ENCODE measurements at regions of chr19 and their contacts with region 1.

Region 1: GRCh38 chr19:38270587-38271167 is 6.3 kb downstream of the SPINT2 start:
- DNase-seq: peak; percentile 74 to 92 (median 82)
- ATAC-seq: peak; percentile 83
- H3K4me3 ChIP-seq: peak overlapping the region; percentile 7; the same call in 1 of the 2 replicates
- H3K27ac ChIP-seq: peak overlapping the region; percentile 85
- H3K4me1 ChIP-seq: peaks cover 47 to 53% of the 10 kb centered on the region in 2 experiments
- H3K27me3 ChIP-seq: no peaks in the 10 kb centered on the region
- CTCF ChIP-seq: no peak
- EP300 ChIP-seq: peak; percentile 60; the same call in 1 of the 2 replicates
- POLR2A ChIP-seq: no peak
- RAD21 ChIP-seq: no peak

Region 2: DNA sequence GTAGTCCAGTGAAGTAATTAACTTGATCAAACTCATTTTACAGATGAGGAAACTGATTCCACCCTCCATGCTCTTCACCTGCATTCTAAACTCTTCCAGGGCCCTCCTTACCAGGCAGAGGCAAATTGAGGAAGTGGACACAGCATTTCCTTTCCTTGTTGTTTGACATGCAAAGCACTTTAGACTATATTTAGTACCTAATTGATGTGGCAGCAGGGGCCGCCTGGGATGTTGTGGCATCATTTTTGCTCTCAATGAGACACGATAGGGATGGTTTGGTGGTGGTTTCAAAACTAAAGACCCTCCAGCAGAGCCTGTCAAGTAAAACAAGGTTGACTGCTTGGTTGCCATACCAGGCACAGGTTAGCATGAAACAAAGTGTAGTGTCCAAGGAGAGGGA is 355.8 kb before region 1 on chr19:
- CTCF ChIA-PET with region 1: no interaction called
- POLR2A ChIA-PET with region 1: no interaction called
- in situ Hi-C with region 1: no loop called
- intact Hi-C with region 1: no loop called
- DNase-seq: no peak
- ATAC-seq: no peak
- H3K4me3 ChIP-seq: no peak overlapping the region
- H3K27ac ChIP-seq: no peak overlapping the region
- H3K4me1 ChIP-seq: no peaks in the 10 kb centered on the region
- H3K27me3 ChIP-seq: no peaks in the 10 kb centered on the region
- CTCF ChIP-seq: no peak
- EP300 ChIP-seq: no peak
- POLR2A ChIP-seq: no peak
- RAD21 ChIP-seq: no peak

Region 3: DNA sequence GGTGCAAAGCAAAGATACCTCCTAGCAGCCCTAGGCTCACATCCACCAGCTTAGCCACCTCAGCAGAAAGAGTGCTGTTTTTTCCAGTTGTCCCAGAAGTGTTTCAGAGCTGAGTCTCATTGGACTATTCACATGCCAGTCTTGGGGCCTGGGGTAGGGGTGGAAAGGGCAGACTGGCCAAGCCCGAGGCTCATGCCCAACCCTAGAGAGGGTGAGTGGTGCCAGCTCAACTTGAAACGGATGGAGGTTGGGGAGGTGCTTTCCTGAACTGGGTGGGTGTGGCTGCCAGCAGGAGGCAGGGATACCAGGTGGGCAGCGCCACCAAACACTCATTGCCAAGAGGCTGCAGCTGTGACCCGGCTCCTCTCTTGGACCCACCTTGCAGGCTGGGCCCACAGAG is 163.5 kb before region 1 on chr19:
- CTCF ChIA-PET with region 1: no interaction called
- POLR2A ChIA-PET with region 1: no interaction called
- in situ Hi-C with region 1: no loop called
- intact Hi-C with region 1: no loop called
- DNase-seq: no peak
- ATAC-seq: no peak
- H3K4me3 ChIP-seq: no peak overlapping the region
- H3K27ac ChIP-seq: no peak overlapping the region
- H3K4me1 ChIP-seq: peaks cover 0 to 3% of the 10 kb centered on the region in 2 experiments; a peak in 2 of 5 replicates
- H3K27me3 ChIP-seq: no peaks in the 10 kb centered on the region
- CTCF ChIP-seq: no peak
- EP300 ChIP-seq: no peak
- POLR2A ChIP-seq: no peak
- RAD21 ChIP-seq: no peak

Region 4: GRCh38 chr19:38255383-38256014 is 15.2 kb before region 1 on chr19:
- CTCF ChIA-PET with region 1: no interaction called
- POLR2A ChIA-PET with region 1: interaction called, 4 read pairs
- in situ Hi-C with region 1: no loop called
- intact Hi-C with region 1: loop called (anchors 2 kb)
- DNase-seq: peak; percentile 61 to 86 (median 70)
- ATAC-seq: peak; percentile 63
- H3K4me3 ChIP-seq: peak overlapping the region; percentile 57
- H3K27ac ChIP-seq: peak overlapping the region; percentile 82
- H3K4me1 ChIP-seq: peaks cover 10 to 54% of the 10 kb centered on the region in 2 experiments; a peak in 4 of 5 replicates
- H3K27me3 ChIP-seq: no peaks in the 10 kb centered on the region
- CTCF ChIP-seq: no peak
- EP300 ChIP-seq: no peak
- POLR2A ChIP-seq: no peak
- RAD21 ChIP-seq: no peak

Region 5: GRCh38 chr19:38284422-38284821 is 13.7 kb after region 1 on chr19:
- CTCF ChIA-PET with region 1: no interaction called
- POLR2A ChIA-PET with region 1: interaction called, 13 read pairs
- in situ Hi-C with region 1: no loop called
- intact Hi-C with region 1: no loop called
- DNase-seq: no peak
- ATAC-seq: no peak; the same call in 2 of the 3 replicates
- H3K4me3 ChIP-seq: no peak overlapping the region
- H3K27ac ChIP-seq: no peak overlapping the region
- H3K4me1 ChIP-seq: peaks cover 10 to 15% of the 10 kb centered on the region in 2 experiments; a peak in 4 of 5 replicates
- H3K27me3 ChIP-seq: no peaks in the 10 kb centered on the region
- CTCF ChIP-seq: no peak
- EP300 ChIP-seq: no peak
- POLR2A ChIP-seq: no peak
- RAD21 ChIP-seq: no peak

Region 6: DNA sequence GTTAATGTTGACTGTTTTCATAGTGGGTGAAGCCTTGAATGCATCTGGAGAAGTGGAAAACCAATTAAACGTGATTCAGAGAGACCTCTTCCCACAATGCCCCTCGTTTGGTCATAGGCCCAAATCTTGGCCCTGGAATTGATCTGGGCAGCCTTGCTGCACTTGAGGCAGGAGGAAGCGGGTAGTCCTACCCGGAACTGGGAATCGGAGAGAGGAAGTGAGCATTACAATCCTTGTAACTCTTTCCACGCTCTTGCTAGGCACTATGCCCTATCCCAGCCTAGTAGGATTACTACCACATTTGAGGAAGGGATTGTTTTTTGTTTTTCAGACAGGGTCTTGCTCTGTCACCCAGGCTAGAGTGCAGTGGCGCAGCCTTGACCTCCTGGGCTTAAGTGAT is 52.6 kb after region 1 on chr19:
- CTCF ChIA-PET with region 1: no interaction called
- POLR2A ChIA-PET with region 1: no interaction called
- in situ Hi-C with region 1: no loop called
- intact Hi-C with region 1: no loop called
- DNase-seq: no peak
- ATAC-seq: no peak
- H3K4me3 ChIP-seq: no peak overlapping the region
- H3K27ac ChIP-seq: no peak overlapping the region
- H3K4me1 ChIP-seq: peaks cover 31 to 39% of the 10 kb centered on the region in 2 experiments
- H3K27me3 ChIP-seq: no peaks in the 10 kb centered on the region
- CTCF ChIP-seq: no peak
- EP300 ChIP-seq: no peak
- POLR2A ChIP-seq: no peak
- RAD21 ChIP-seq: no peak

Measured in K562 (cell line).